ENCODE measurements at regions of chr22 and their contacts with region 1.

Region 1: GRCh38 chr22:31544481-31545480 is 48.4 kb downstream of the SFI1 start:
- DNase-seq: no peak
- H3K4me3 ChIP-seq: no peak overlapping the region
- H3K27ac ChIP-seq: no peak overlapping the region
- H3K4me1 ChIP-seq: no peaks in the 10 kb centered on the region
- H3K27me3 ChIP-seq: no peaks in the 10 kb centered on the region
- CTCF ChIP-seq: no peak
- EP300 ChIP-seq: no peak
- POLR2A ChIP-seq: no peak

Region 2: DNA sequence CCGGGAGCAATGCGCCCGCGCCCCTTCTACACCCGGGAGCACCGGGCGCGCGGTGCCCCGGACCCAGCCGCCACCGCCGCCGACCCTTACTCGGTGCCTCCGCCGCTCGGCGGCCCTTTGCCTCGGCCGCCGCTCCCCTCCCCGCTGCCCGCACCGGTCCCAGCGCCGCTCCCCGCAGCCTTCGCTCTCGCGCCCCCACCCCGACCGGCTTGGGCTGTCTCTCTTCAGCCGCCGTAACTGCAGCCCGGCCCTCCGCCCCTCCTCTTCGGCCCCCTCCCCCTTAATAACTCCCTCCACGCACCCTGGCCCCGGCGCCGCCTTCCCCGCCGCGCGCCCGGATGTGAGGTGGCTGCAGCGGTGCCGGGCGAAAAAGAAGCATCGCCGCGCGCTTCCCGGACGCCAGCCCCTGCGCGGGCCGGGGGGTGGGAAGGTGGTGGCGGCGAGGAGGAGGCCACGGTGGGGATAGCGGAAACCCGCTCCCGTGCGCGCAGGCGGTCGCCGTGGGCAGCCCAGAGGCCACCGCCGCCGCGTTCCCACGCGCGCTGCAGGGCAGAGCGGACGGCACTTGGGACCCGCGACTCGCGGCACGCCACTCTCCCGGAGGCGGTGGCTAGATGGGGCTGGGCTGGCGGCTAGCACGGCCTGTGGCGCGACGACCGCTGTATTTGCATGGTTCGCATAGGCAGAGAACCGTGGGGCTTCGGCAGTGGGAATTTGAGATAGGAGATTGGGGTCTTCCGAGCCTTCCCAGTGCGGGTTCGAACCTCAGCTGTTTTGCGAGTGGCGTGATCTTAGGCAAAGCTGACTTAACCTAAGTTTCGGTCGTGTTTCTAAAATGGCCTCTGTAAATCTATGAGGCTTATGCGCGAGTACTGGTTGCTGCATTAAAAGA is 54.9 kb before region 1 on chr22 and contains the start of gene EIF4ENIF1:
- intact Hi-C with region 1: loop called (anchors 10 kb)
- DNase-seq: peak; percentile 92
- H3K4me3 ChIP-seq: peak within 1 kb of the TSS; percentile 64 to 83 (median 80)
- H3K27ac ChIP-seq: peak within 1 kb of the TSS; percentile 91 to 97 (median 94)
- H3K4me1 ChIP-seq: peaks cover 0 to 30% (median 25%) of the 10 kb centered on the region in 4 donors
- H3K27me3 ChIP-seq: no peaks in the 10 kb centered on the region
- CTCF ChIP-seq: no peak
- EP300 ChIP-seq: no peak
- POLR2A ChIP-seq: peak in 1 of 2 donors; percentile 12
- total RNA-seq, gene EIF4ENIF1: 16.6 to 23.8 (median 22.2) TPM

Region 3: DNA sequence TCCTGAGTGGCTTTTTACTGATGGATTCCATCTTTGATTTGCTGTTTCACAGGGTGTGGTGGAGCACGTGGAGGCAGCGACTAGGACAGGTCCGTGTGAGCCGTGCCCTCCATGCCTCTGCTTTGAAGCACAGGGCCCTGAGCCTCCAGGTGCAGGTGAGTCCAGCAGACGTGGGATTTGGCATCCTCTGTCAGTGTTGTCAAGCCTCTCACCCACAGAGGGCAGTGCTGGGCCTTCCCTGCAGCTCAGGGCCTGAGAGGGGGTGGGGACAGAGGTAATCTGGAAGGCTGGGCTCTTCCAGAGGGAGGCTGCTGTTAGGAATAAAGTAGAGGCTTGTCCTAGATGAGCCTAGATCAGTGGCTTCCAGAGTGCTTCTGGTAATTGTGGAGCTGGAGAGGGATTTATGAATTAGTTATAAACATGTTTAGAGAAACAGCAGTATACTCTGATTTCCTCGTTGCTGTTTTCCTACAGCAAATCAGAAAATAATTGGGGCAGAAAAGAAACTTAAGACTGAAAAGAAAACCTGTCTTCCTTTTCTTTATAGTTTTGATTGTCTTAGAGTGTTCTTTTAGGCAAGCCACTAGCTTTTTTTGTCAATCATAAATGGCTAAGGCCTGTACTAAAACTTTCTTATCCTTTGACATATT is 16.6 kb after region 1 on chr22:
- intact Hi-C with region 1: no loop called
- DNase-seq: peak; percentile 87
- H3K4me3 ChIP-seq: no peak overlapping the region
- H3K27ac ChIP-seq: peak overlapping the region in 2 of 4 donors; percentile 27 to 44
- H3K4me1 ChIP-seq: peaks cover 0 to 8% (median 5%) of the 10 kb centered on the region in 4 donors
- H3K27me3 ChIP-seq: no peaks in the 10 kb centered on the region
- CTCF ChIP-seq: peak; percentile 53 to 80 (median 78)
- EP300 ChIP-seq: no peak
- POLR2A ChIP-seq: no peak